Aorta (tissue), 5 donors: ENCODE measurements at regions of chr1 and their contacts with region 1.

Region 1: DNA sequence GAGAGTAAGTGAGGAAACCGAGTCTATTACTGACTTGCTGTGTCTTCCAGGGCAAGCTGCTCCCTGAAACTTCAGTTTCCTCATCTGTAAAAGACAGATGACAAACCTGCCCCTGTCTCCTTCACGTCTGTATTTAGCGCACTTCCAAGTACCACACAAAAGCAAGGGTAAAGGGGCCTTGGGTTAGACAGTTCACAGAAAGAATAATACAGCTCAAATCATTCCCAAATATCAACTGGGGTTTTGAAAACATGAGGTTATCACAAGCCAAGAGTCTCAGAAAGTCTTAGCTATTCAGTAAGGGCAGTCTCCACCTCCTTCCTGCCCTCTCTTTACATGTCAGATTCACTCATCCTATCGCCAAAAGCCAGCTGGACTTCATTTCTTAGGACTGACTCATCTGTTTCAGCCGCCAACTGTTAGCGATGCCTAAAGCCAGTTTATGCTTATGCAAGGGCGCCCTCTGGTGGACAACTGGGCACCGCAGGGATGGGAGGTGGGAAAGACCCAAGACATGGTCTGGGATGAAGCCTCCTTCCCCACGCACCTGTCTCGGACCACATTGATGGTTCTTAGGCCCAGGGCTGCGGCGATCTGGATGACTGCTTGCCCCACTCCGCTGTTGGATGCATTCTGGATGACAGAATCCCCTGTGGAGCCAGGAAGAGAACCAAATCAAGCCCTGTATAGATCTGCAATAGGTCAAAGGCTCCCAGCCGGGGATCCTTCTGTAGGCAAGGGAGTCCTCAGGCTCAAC is 21.1 kb upstream of the SRSF4 start:
- DNase-seq: peak; percentile 95 to 99
- ATAC-seq: peak; percentile 96
- H3K4me3 ChIP-seq: no peak overlapping the region
- H3K27ac ChIP-seq: peak overlapping the region; percentile 80 to 88
- H3K4me1 ChIP-seq: no peaks in the 10 kb centered on the region
- H3K27me3 ChIP-seq: no peaks in the 10 kb centered on the region

Region 2: GRCh38 chr1:28779751-28780408 is 422.9 kb before region 1 on chr1:
- intact Hi-C with region 1: loop called (anchors 5 to 10 kb)
- DNase-seq: peak in 1 of 2 donors; percentile 36
- ATAC-seq: no peak
- H3K4me3 ChIP-seq: no peak overlapping the region
- H3K27ac ChIP-seq: no peak overlapping the region
- H3K4me1 ChIP-seq: no peaks in the 10 kb centered on the region
- H3K27me3 ChIP-seq: no peaks in the 10 kb centered on the region

Region 3: GRCh38 chr1:28886731-28887418 is 315.9 kb before region 1 on chr1:
- intact Hi-C with region 1: loop called (anchors 1 to 2 kb)
- DNase-seq: peak; percentile 89 to 94
- ATAC-seq: peak; percentile 89
- H3K4me3 ChIP-seq: peak overlapping the region; percentile 88 to 93
- H3K27ac ChIP-seq: no peak overlapping the region
- H3K4me1 ChIP-seq: peaks cover 0 to 2% of the 10 kb centered on the region in 2 donors
- H3K27me3 ChIP-seq: no peaks in the 10 kb centered on the region

Region 4: DNA sequence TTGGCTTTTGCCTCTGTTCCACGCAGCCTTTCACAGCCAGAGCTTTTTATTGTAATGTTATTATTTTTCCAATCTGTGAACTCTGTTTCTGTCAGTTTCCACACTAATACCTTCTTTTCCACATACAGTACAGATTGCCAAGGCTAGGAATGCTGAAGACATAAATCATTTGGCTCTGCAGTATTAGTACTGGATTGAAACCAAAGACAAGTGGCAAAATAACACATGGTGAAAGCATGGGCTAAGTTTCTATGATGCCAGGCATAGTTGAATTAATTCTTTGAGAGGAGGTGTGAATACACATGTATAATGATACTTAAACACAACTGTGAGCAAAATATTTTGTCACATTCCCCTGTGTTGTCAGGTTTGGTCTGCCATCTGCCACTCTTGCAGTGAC is 152.6 kb before region 1 on chr1:
- intact Hi-C with region 1: loop called in 1 of 2 experiments (anchors 5 kb)
- DNase-seq: no peak
- ATAC-seq: peak; percentile 54
- H3K4me3 ChIP-seq: no peak overlapping the region
- H3K27ac ChIP-seq: no peak overlapping the region
- H3K4me1 ChIP-seq: no peaks in the 10 kb centered on the region
- H3K27me3 ChIP-seq: no peaks in the 10 kb centered on the region

Region 5: GRCh38 chr1:29181413-29182225 is 21.1 kb before region 1 on chr1 and contains the start of gene SRSF4:
- intact Hi-C with region 1: loop called in 1 of 2 experiments (anchors 2 kb)
- DNase-seq: peak; percentile 100
- ATAC-seq: peak; percentile 98
- H3K4me3 ChIP-seq: peak within 1 kb of the TSS; percentile 69 to 93
- H3K27ac ChIP-seq: peak within 1 kb of the TSS; percentile 72 to 98
- H3K4me1 ChIP-seq: peaks cover 2 to 4% of the 10 kb centered on the region in 2 donors
- H3K27me3 ChIP-seq: no peaks in the 10 kb centered on the region
- total RNA-seq, gene SRSF4: 85.0 to 85.6 TPM